ENCODE measurements at regions of chr19 and their contacts with region 1.

Region 1: GRCh38 chr19:18117692-18118378 is 20.3 kb downstream of the MAST3 start:
- DNase-seq: peak; percentile 54
- H3K4me3 ChIP-seq: peak overlapping the region; percentile 41 to 66 (median 66)
- H3K27ac ChIP-seq: no peak overlapping the region
- H3K4me1 ChIP-seq: peaks cover 21% of the 10 kb centered on the region
- H3K27me3 ChIP-seq: no peaks in the 10 kb centered on the region
- CTCF ChIP-seq: no peak

Region 2: GRCh38 chr19:17957149-17957849 is 160.5 kb before region 1 on chr19:
- CTCF ChIA-PET with region 1: no interaction called
- dilution Hi-C with region 1: loop called (anchors 5 kb)
- in situ Hi-C with region 1: no loop called
- intact Hi-C with region 1: no loop called
- DNase-seq: no peak
- H3K4me3 ChIP-seq: no peak overlapping the region
- H3K27ac ChIP-seq: no peak overlapping the region
- H3K4me1 ChIP-seq: no peaks in the 10 kb centered on the region
- H3K27me3 ChIP-seq: peaks cover 13% of the 10 kb centered on the region
- CTCF ChIP-seq: no peak

Region 3: DNA sequence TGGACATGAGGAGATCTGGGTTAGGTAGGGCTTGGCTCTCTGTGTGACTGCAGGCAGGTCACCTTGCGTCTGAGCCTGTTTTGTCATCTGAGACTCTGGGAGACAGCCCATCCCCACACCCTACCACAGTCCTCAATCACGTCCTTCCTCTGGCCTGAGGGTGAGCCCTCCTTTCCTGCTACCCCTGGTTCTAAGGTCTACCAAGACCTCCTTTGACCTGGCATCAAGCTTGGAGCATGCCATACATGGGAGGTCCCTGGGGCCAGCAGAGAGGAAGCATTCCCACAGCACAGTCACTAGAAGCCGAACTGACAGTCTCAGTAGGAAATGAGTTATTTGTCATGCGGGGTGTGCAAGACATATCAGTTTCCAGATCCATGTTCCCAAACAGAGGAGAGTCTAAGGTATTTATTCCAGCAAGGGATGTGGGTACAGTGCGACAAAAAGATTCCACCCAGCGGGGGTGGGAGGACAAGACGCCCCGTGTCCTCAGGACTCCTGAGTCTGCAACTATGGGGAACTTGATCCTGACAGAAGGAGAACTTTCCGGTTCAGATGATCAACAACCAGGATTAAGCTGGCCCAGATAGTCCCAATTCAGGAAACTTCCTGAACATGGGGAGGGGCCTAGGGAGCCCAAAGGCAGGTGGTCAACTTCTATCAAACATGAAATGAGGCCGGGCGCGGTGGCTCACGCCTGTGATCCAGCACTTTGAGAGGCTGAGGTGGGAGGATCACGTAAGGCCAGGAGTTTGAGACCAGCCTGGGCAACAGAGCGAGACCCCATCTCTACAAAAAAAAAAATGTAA is 100.4 kb before region 1 on chr19:
- CTCF ChIA-PET with region 1: no interaction called
- dilution Hi-C with region 1: loop called (anchors 5 kb)
- in situ Hi-C with region 1: no loop called
- intact Hi-C with region 1: no loop called
- DNase-seq: no peak
- H3K4me3 ChIP-seq: no peak overlapping the region
- H3K27ac ChIP-seq: no peak overlapping the region
- H3K4me1 ChIP-seq: peaks cover 18% of the 10 kb centered on the region
- H3K27me3 ChIP-seq: no peaks in the 10 kb centered on the region
- CTCF ChIP-seq: no peak

Region 4: GRCh38 chr19:18160971-18161635 is 43.3 kb after region 1 on chr19:
- CTCF ChIA-PET with region 1: interaction called, 8 read pairs
- dilution Hi-C with region 1: loop called (anchors 5 kb)
- in situ Hi-C with region 1: loop called in 1 of 2 experiments (anchors 10 kb)
- intact Hi-C with region 1: loop called (anchors 2 kb)
- DNase-seq: peak; percentile 57
- H3K4me3 ChIP-seq: peak overlapping the region in 2 of 3 experiments; percentile 43 to 44
- H3K27ac ChIP-seq: no peak overlapping the region
- H3K4me1 ChIP-seq: peaks cover 40% of the 10 kb centered on the region
- H3K27me3 ChIP-seq: no peaks in the 10 kb centered on the region
- CTCF ChIP-seq: peak; percentile 41 to 50

Region 5: GRCh38 chr19:18322759-18323460 is 205.1 kb after region 1 on chr19 and contains the start of gene LSM4:
- CTCF ChIA-PET with region 1: no interaction called
- dilution Hi-C with region 1: no loop called
- in situ Hi-C with region 1: no loop called
- intact Hi-C with region 1: loop called (anchors 1 kb)
- DNase-seq: peak; percentile 98
- H3K4me3 ChIP-seq: peak within 1 kb of the TSS; percentile 73 to 95 (median 82)
- H3K27ac ChIP-seq: peak within 1 kb of the TSS; percentile 82
- H3K4me1 ChIP-seq: peaks cover 16% of the 10 kb centered on the region
- H3K27me3 ChIP-seq: no peaks in the 10 kb centered on the region
- CTCF ChIP-seq: peak; percentile 15 to 61
- total RNA-seq, gene LSM4: 127 to 182 TPM

Measured in mammary epithelial cell (primary cell).